ENCODE measurements at regions of chr7 and their contacts with region 1.

Region 1: DNA sequence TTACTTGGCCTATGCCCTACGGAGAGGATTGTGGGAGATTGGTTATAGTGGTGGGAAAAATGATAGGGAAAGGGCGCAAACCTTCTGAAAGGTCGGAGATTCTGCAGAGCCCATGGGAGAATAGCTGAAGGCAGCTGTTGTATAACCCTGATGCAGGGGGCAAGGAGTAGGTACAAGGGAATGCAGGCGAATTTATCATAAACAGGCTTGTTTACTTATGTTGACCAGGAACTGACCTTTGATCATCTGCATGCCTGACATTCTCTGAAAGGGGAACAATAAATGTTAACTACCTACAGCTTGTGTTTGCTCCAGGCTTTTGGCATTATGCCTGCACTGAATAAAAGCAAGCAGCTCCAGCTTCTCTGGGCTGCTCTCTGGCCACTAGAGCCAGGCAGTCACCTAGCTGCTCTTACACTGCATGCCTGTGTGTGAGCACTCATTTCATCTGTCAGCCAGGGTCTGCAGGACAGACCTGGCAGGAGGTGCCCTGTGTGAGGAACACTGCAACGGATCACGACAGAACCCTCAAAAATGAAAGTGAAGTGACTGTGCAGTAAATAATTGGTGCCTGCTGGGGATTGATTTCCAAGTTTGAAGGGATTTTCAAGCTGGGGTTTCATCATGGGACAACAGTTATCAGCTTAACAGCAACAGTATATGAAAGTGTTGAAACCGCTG is 31.1 kb upstream of the ABCA13 start:
- DNase-seq: peak; percentile 71 to 77
- H3K4me3 ChIP-seq: no peak overlapping the region
- H3K4me3 Mint-ChIP-seq: no peak overlapping the region
- H3K27ac Mint-ChIP-seq: peak overlapping the region; percentile 39
- H3K4me1 ChIP-seq: peaks cover 26% of the 10 kb centered on the region
- H3K4me1 Mint-ChIP-seq: peaks cover 27% of the 10 kb centered on the region
- H3K27me3 ChIP-seq: no peaks in the 10 kb centered on the region
- H3K27me3 Mint-ChIP-seq: no peaks in the 10 kb centered on the region
- CTCF ChIP-seq: no peak

Region 2: GRCh38 chr7:48209004-48209600 is 69.0 kb after region 1 on chr7:
- CTCF ChIA-PET with region 1: no interaction called
- POLR2A ChIA-PET with region 1: no interaction called
- intact Hi-C with region 1: loop called (anchors 1 kb)
- DNase-seq: peak in 1 of 2 experiments; percentile 58
- H3K4me3 ChIP-seq: no peak overlapping the region
- H3K4me3 Mint-ChIP-seq: peak overlapping the region; percentile 28
- H3K27ac Mint-ChIP-seq: peak overlapping the region; percentile 55
- H3K4me1 ChIP-seq: peaks cover 12% of the 10 kb centered on the region; the same call in 1 of the 2 replicates
- H3K4me1 Mint-ChIP-seq: peaks cover 20% of the 10 kb centered on the region
- H3K27me3 ChIP-seq: no peaks in the 10 kb centered on the region
- H3K27me3 Mint-ChIP-seq: no peaks in the 10 kb centered on the region
- CTCF ChIP-seq: no peak